OCI-LY7 (cell line): ENCODE measurements at regions of chr4 and their contacts with region 1.

Region 1: GRCh38 chr4:8403173-8403753 is 37.3 kb downstream of the ACOX3 start:
- DNase-seq: peak; percentile 68
- H3K4me3 ChIP-seq: no peak overlapping the region
- H3K27ac ChIP-seq: no peak overlapping the region
- H3K4me1 ChIP-seq: peaks cover 8% of the 10 kb centered on the region
- CTCF ChIP-seq: peak; percentile 99

Region 2: DNA sequence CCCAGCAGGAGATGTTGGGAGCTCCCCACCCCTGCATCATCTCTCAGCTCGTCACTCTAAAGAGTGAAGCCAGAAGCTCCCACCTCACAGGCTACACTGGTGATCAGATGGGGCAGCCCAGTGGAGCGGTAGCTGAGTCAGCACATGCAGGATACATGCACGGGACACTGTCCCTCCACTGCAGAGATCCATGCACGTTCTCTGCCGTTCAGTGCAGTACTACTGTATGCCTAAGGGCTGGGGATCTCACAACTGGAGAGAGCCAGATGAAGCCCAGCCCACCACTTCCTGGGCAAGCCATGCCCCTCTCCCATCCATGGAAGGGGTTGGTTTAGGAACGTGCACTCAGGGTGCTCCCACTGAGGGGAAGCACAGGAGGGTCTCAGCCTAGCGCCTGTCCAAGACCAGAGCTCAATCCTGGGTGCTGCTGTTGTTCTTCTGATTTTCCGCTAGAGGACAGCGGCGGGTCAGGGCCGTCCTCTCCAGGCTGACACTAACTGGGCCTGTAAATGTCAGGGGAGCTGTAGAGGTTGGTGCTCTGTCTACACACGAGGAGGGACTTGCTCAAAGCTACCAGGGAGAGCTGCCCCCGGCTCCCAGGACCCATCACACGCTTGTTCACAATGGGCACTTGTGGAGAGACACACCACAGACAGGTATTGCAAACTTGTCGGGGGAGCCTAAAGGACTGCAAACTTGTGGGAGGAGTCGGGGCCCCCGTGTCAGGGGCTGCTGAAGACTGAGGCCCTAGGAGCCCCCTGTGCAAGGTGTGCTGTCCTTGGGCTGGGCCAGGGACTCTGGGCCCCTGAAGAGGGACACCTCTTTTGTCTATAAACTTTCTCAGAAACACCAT is 226.5 kb before region 1 on chr4:
- CTCF ChIA-PET with region 1: interaction called, 4 read pairs
- POLR2A ChIA-PET with region 1: no interaction called
- intact Hi-C with region 1: loop called (anchors 2 kb)
- DNase-seq: peak; percentile 71
- H3K4me3 ChIP-seq: no peak overlapping the region
- H3K27ac ChIP-seq: no peak overlapping the region
- H3K4me1 ChIP-seq: no peaks in the 10 kb centered on the region
- CTCF ChIP-seq: peak; percentile 86

Region 3: DNA sequence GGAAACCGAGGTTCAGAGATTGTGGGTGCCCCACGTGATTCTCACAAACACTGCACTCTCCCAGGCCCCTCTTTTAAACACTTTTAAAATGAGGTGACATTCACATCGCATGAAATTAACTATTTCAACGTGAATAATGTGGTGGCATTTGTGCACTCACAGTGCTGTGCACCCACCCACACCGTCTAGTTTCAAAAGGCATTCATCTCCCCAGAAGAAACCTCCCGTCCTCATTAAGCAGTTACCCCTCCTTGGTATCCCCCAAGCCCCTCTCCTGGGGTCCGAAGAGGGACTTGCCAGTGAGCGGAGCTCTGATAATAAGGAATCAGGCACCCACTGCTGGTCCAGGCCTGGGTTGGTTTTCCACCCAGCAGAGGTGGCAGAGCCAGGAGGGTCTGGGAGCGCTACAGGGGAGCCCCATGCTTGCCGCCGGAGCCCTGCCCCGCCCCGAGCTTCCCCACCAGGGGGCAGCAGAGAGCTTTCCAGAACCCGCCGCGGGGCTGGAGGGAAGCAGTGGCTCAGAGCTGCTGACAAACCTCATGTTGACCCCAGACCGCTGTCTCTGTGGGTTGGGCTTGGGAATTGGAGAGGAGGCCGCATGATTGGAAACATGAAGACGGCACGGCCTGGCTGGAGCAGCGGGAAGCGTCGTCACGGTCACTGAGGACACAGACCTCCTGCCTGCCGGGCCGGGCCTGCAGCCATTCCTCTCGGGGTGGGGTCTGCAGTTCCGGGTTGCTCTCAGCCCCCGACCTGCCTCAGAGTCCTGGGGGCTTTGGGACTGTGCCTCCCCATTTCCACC is 161.2 kb before region 1 on chr4:
- CTCF ChIA-PET with region 1: no interaction called
- POLR2A ChIA-PET with region 1: interaction called, 10 read pairs
- intact Hi-C with region 1: loop called (anchors 1 kb)
- DNase-seq: peak; percentile 77
- H3K4me3 ChIP-seq: no peak overlapping the region
- H3K27ac ChIP-seq: no peak overlapping the region
- H3K4me1 ChIP-seq: peaks cover 10% of the 10 kb centered on the region
- CTCF ChIP-seq: peak; percentile 89

Region 4: GRCh38 chr4:8255698-8256441 is 147.4 kb before region 1 on chr4:
- CTCF ChIA-PET with region 1: no interaction called
- POLR2A ChIA-PET with region 1: no interaction called
- intact Hi-C with region 1: no loop called
- DNase-seq: no peak
- H3K4me3 ChIP-seq: no peak overlapping the region
- H3K27ac ChIP-seq: no peak overlapping the region
- H3K4me1 ChIP-seq: no peaks in the 10 kb centered on the region
- CTCF ChIP-seq: no peak

Region 5: DNA sequence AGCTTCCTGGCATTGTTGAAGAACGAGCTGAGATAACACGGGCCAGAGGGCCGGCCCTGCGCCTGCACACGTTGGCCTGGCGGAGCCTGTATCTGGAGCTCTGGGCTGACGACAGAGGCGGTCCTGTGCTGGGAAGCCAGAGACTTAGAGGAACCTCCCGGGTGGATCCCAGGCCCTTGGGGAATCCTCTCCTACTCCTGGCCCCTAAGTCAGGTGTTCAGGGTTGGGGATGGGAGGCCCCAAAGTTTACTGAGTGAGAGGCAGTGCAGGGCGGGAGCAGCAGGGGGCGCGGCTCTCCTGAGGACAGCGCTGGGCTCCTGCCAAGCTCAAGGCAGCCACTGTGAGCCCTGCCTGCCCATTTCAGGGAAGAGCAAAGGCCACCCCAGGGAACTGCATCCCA is 136.2 kb before region 1 on chr4:
- CTCF ChIA-PET with region 1: interaction called, 8 read pairs
- POLR2A ChIA-PET with region 1: interaction called, 3 read pairs
- intact Hi-C with region 1: loop called (anchors 1 kb)
- DNase-seq: peak; percentile 54
- H3K4me3 ChIP-seq: no peak overlapping the region
- H3K27ac ChIP-seq: no peak overlapping the region
- H3K4me1 ChIP-seq: no peaks in the 10 kb centered on the region
- CTCF ChIP-seq: peak; percentile 75

Region 6: GRCh38 chr4:8283631-8284121 is 119.6 kb before region 1 on chr4:
- CTCF ChIA-PET with region 1: no interaction called
- POLR2A ChIA-PET with region 1: no interaction called
- intact Hi-C with region 1: loop called (anchors 1 kb)
- DNase-seq: peak; percentile 49
- H3K4me3 ChIP-seq: no peak overlapping the region
- H3K27ac ChIP-seq: no peak overlapping the region
- H3K4me1 ChIP-seq: no peaks in the 10 kb centered on the region
- CTCF ChIP-seq: peak; percentile 46

Region 7: GRCh38 chr4:8315435-8316250 is 87.6 kb before region 1 on chr4:
- CTCF ChIA-PET with region 1: interaction called, 3 read pairs
- POLR2A ChIA-PET with region 1: no interaction called
- intact Hi-C with region 1: loop called (anchors 5 kb)
- DNase-seq: peak; percentile 66
- H3K4me3 ChIP-seq: no peak overlapping the region
- H3K27ac ChIP-seq: no peak overlapping the region
- H3K4me1 ChIP-seq: peaks cover 31% of the 10 kb centered on the region
- CTCF ChIP-seq: no peak

Region 8: DNA sequence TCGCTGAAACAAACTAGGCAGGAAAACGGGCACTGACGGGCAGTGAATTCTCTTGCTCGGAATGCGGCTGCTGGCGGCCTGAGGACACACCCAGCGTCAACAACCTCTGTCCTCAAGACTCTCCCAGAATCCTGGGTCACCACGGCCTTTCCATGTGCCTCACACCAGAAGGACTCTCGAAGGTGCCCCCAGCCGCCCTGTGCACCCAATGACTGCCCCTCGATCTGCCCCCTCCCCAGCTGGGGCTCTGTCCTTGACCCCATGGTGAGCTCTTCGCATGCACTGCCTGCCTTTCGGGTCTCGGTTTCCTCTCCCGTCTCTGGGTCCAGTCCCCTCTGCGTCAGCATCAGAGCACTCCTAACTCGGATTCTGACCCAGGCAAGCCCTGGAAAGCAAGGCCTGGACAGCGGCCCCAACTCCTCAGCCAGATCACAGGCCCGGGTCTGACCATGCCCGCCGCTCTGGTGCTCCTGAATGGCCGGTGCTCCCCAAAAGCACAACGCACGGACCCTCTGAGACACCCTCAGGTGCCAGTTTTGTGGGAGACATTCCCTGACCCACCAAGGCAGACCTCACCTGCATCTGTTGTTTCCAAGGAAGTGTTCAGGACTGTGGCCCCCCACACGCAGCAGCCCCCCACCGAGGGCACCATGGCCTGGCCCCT is 18.7 kb before region 1 on chr4:
- CTCF ChIA-PET with region 1: no interaction called
- POLR2A ChIA-PET with region 1: no interaction called
- intact Hi-C with region 1: no loop called
- DNase-seq: no peak
- H3K4me3 ChIP-seq: no peak overlapping the region
- H3K27ac ChIP-seq: no peak overlapping the region
- H3K4me1 ChIP-seq: no peaks in the 10 kb centered on the region
- CTCF ChIP-seq: no peak